ENCODE measurements at regions of chr20 and their contacts with region 1.

Region 1: DNA sequence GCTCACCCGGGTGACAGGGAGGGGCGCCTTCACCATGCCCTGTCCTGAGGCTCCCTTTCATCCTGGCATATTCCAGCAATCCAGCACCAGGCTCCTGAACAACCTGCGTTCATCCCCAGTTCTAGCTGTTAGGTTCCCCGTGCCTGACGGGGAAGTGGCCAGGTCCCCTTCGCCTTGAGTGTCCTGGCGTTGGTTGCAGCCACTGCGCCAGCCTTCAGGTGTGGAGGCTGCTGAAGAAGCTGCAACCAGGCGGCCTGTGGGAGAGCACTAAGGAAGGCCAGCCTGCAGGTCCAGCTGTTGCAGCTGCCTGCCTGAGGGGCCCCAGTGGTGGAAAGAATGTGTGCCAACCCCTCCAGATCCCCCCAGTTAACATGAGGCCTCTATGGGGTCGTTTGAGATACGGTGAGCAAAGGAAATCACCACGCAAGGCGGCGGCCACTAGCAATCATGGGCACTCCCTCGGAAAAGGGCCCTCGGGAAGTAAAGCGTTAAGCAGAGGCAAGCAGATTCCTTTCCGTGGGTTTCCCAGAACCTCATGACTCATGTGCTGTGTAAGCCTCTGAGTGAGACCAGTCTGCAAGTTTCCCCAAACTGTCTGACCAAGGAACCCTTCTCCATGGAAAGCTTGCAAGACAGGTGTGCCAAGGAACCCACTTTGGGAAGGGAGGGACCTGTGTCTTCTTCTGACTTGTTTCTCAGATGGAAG is 320.8 kb downstream of the TAF4 start:
- DNase-seq: no peak
- ATAC-seq: no peak
- H3K4me3 ChIP-seq: no peak overlapping the region
- H3K27ac ChIP-seq: no peak overlapping the region
- H3K4me1 ChIP-seq: no peaks in the 10 kb centered on the region
- H3K27me3 ChIP-seq: peaks cover 0 to 24% (median 7%) of the 10 kb centered on the region in 7 donors
- CTCF ChIP-seq: no peak

Region 2: GRCh38 chr20:61705386-61706258 is 39.2 kb before region 1 on chr20:
- intact Hi-C with region 1: loop called in 1 of 10 experiments (anchors 1 kb)
- DNase-seq: no peak
- ATAC-seq: no peak
- H3K4me3 ChIP-seq: no peak overlapping the region
- H3K27ac ChIP-seq: no peak overlapping the region
- H3K4me1 ChIP-seq: no peaks in the 10 kb centered on the region
- H3K27me3 ChIP-seq: peaks cover 0 to 15% (median 0%) of the 10 kb centered on the region in 7 donors
- CTCF ChIP-seq: no peak

Measured in heart right ventricle (tissue), 16 donors.